ENCODE measurements at regions of chr4 and their contacts with region 1.

Region 1: GRCh38 chr4:41887821-41888686 is 47.2 kb upstream of the TMEM33 start:
- DNase-seq: no peak
- H3K4me3 ChIP-seq: no peak overlapping the region
- H3K27ac ChIP-seq: no peak overlapping the region
- H3K4me1 ChIP-seq: no peaks in the 10 kb centered on the region
- H3K27me3 ChIP-seq: peaks cover 3 to 17% (median 16%) of the 10 kb centered on the region in 4 experiments
- CTCF ChIP-seq: peak in 2 of 3 experiments; percentile 63 to 69; a peak in 3 of 4 replicates
- EP300 ChIP-seq: no peak
- POLR2A ChIP-seq: no peak
- RAD21 ChIP-seq: peak; percentile 79 to 80

Region 2: DNA sequence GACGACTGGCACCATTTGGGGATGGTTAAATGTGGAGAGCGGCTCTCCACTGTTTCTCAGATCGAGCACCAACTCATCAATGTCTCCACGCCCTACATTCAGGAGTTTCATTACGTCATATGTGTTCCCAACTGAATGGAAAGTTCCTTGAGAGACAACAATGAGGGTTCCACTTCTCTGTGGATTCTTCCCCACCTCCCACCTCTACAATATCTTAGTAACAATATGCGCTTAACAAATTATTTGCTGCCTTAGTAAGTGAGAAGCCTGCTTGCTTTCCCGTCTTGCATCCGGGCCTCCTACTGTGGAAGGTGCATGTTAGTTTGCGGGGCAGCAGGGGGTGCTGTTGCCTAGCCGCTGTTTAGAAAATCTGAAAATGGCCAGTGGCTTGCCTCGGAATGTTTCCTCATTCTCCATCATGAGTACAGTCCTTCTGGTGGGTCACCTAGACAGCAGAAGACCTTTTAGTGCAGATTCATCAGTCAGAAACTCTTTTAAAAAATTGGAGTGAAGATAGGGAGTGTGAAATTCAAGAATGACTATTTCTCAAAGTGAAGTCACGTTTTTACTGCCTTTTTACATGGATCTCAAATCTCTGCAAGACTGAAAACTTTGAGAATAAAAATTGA is 195.2 kb before region 1 on chr4:
- CTCF ChIA-PET with region 1: interaction called, 29 read pairs
- POLR2A ChIA-PET with region 1: no interaction called
- DNase-seq: peak; percentile 25 to 72
- H3K4me3 ChIP-seq: peak overlapping the region in 1 of 4 experiments; percentile 19; a peak in 1 of 8 replicates
- H3K27ac ChIP-seq: no peak overlapping the region
- H3K4me1 ChIP-seq: no peaks in the 10 kb centered on the region
- H3K27me3 ChIP-seq: no peaks in the 10 kb centered on the region
- CTCF ChIP-seq: peak; percentile 86 to 92 (median 88)
- EP300 ChIP-seq: no peak
- POLR2A ChIP-seq: no peak
- RAD21 ChIP-seq: peak; percentile 96 to 97

Region 3: GRCh38 chr4:42144028-42144427 is 256.0 kb after region 1 on chr4:
- CTCF ChIA-PET with region 1: no interaction called
- POLR2A ChIA-PET with region 1: no interaction called
- DNase-seq: no peak
- H3K4me3 ChIP-seq: no peak overlapping the region
- H3K27ac ChIP-seq: no peak overlapping the region
- H3K4me1 ChIP-seq: no peaks in the 10 kb centered on the region
- H3K27me3 ChIP-seq: no peaks in the 10 kb centered on the region
- CTCF ChIP-seq: no peak
- EP300 ChIP-seq: no peak
- POLR2A ChIP-seq: no peak
- RAD21 ChIP-seq: no peak

Measured in H1 (cell line).